ENCODE measurements at regions of chr1 and their contacts with region 1.

Region 1: GRCh38 chr1:186985889-186986491 is 157.2 kb downstream of the PLA2G4A start:
- ATAC-seq: peak; percentile 72 to 88 (median 86)
- H3K4me3 ChIP-seq: no peak overlapping the region
- H3K27ac ChIP-seq: no peak overlapping the region
- H3K4me1 ChIP-seq: peaks cover 0 to 9% of the 10 kb centered on the region in 2 donors

Region 2: GRCh38 chr1:186375088-186375953 is 610.7 kb before region 1 on chr1 and contains the starts of genes ODR4 and TPR:
- in situ Hi-C with region 1: loop called in 1 of 9 experiments (anchors 25 kb)
- ATAC-seq: peak; percentile 83 to 91 (median 88)
- H3K4me3 ChIP-seq: peak within 1 kb of the TSS; percentile 45 to 83 (median 62)
- H3K27ac ChIP-seq: peak within 1 kb of the TSS; percentile 94
- H3K4me1 ChIP-seq: peaks cover 4 to 5% of the 10 kb centered on the region in 2 donors
- total RNA-seq, gene ODR4: 18.7 to 26.9 (median 24.3) TPM
- total RNA-seq, gene TPR: 61.0 to 156 (median 79.1) TPM

Region 3: DNA sequence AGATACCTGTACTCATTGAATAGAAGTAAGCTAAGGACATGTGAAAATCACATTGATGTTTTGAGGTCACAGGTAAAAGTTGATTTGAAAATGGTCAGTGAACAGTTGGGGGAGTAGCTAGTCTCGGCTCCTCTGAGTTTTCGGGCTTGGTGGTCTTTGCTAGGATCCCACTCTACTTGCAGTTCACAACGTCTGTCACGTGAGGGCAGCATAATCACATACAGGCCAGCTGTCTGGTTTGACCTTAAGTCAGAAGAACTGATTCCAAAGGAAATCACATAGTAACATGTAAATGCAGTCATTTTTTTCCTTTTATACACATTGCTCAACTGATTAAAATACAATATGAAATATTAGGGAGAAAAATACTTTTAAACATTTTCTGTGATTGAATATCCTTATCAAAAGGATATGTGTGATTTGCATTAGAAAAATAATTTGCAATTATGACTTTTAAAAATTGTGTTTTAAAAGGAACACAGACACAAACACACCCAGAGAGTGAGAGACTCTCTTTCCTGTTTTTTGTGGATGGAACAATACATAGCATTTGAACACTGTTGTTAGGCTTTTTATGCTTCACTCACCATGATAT is 503.2 kb before region 1 on chr1:
- in situ Hi-C with region 1: loop called in 7 of 9 experiments (anchors 5 to 25 kb)
- ATAC-seq: peak; percentile 30 to 84 (median 66)
- H3K4me3 ChIP-seq: no peak overlapping the region
- H3K27ac ChIP-seq: no peak overlapping the region
- H3K4me1 ChIP-seq: no peaks in the 10 kb centered on the region

Region 4: GRCh38 chr1:186605762-186606350 is 380.1 kb before region 1 on chr1:
- in situ Hi-C with region 1: loop called in 3 of 9 experiments (anchors 10 to 25 kb)
- ATAC-seq: peak in 3 of 8 experiments; percentile 85 to 91 (median 90)
- H3K4me3 ChIP-seq: no peak overlapping the region
- H3K27ac ChIP-seq: no peak overlapping the region
- H3K4me1 ChIP-seq: no peaks in the 10 kb centered on the region

Region 5: GRCh38 chr1:186680245-186681061 is 305.5 kb before region 1 on chr1 and contains the start of gene PTGS2:
- in situ Hi-C with region 1: loop called in 2 of 9 experiments (anchors 25 kb)
- ATAC-seq: peak; percentile 97 to 100 (median 99)
- H3K4me3 ChIP-seq: peak within 1 kb of the TSS; percentile 43 to 57 (median 47)
- H3K27ac ChIP-seq: no peak within 1 kb of the TSS
- H3K4me1 ChIP-seq: no peaks in the 10 kb centered on the region
- total RNA-seq, gene PTGS2: 0.11 to 2.3 (median 0.80) TPM

Region 6: DNA sequence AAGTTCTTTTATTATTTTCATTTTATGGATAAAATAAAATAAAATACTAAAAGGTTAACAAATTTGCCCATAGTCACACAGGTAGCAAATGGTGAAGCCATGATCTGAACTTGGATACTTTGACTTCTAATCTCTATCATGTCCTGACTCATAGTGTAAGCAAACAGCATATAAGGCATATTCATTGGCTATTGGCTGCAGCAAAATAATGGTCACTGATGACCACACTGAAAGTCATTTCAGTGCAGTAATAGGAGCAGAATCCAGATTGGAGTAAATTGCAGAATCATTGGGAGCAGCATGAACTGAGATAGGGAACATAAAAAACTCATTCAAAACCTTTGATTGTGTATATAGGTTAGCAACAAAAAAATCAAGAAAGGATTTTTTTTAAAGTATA is 105.7 kb after region 1 on chr1:
- in situ Hi-C with region 1: no loop called
- ATAC-seq: no peak
- H3K4me3 ChIP-seq: no peak overlapping the region
- H3K27ac ChIP-seq: no peak overlapping the region
- H3K4me1 ChIP-seq: no peaks in the 10 kb centered on the region

Region 7: DNA sequence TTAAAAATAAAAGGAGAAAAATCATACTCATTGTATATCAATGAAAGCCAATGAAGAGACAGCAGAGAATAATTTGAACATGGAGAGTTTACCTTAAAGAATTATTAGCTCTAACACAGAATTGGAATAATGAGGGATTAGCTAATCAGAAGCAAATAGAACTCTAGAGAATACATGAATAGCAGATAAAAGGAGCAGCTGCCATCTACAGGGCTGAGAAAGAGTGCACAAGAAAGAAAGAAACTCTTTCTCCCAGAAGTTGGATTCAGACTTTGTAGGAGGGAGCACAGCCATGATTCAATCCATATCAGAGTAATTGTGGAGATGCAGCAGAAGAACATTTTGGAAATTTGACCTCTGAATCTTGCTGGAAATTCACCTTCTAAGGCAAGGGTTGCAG is 1014.0 kb after region 1 on chr1:
- in situ Hi-C with region 1: no loop called
- ATAC-seq: peak in 1 of 8 experiments; percentile 20
- H3K4me3 ChIP-seq: no peak overlapping the region
- H3K27ac ChIP-seq: no peak overlapping the region
- H3K4me1 ChIP-seq: no peaks in the 10 kb centered on the region